Activated naive CD4-positive, alpha-beta T cell treated with anti-CD3 and anti-CD28 coated beads for 36 hours (primary cell): ENCODE measurements at regions of chr16 and their contacts with region 1.

Region 1: GRCh38 chr16:77584205-77584859 is 138.0 kb upstream of the NUDT7 start:
- DNase-seq: peak; percentile 63
- H3K4me3 Mint-ChIP-seq: no peak overlapping the region
- H3K27ac Mint-ChIP-seq: no peak overlapping the region
- H3K4me1 Mint-ChIP-seq: no peaks in the 10 kb centered on the region
- H3K27me3 Mint-ChIP-seq: peaks cover 17% of the 10 kb centered on the region

Region 2: DNA sequence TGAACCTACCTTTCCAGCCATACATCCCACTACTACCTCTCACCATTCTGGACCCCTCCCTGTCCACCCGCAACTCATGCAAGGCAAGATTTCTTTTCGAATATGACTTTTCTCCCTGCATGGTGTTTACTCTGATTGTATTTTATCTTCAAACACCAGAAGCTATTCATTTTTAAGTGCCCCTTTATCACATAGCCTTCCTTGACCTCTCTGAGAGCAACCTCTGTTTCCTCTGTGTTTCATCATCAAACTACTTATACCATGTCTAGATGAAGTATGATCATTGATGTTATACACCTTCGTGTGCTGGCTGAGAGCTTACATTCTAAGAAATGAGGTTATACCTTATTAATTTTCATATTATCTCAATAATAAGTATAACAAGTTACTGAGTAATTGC is 353.3 kb before region 1 on chr16:
- CTCF ChIA-PET with region 1: interaction called, 179 read pairs
- intact Hi-C with region 1: loop called (anchors 1 kb)
- DNase-seq: no peak
- H3K4me3 Mint-ChIP-seq: no peak overlapping the region
- H3K27ac Mint-ChIP-seq: no peak overlapping the region
- H3K4me1 Mint-ChIP-seq: peaks cover 4% of the 10 kb centered on the region
- H3K27me3 Mint-ChIP-seq: peaks cover 21% of the 10 kb centered on the region

Region 3: GRCh38 chr16:77376358-77376757 is 208.0 kb before region 1 on chr16:
- CTCF ChIA-PET with region 1: no interaction called
- intact Hi-C with region 1: loop called (anchors 1 kb)
- DNase-seq: peak; percentile 7
- H3K4me3 Mint-ChIP-seq: no peak overlapping the region
- H3K27ac Mint-ChIP-seq: no peak overlapping the region
- H3K4me1 Mint-ChIP-seq: no peaks in the 10 kb centered on the region
- H3K27me3 Mint-ChIP-seq: peaks cover 4% of the 10 kb centered on the region

Region 4: DNA sequence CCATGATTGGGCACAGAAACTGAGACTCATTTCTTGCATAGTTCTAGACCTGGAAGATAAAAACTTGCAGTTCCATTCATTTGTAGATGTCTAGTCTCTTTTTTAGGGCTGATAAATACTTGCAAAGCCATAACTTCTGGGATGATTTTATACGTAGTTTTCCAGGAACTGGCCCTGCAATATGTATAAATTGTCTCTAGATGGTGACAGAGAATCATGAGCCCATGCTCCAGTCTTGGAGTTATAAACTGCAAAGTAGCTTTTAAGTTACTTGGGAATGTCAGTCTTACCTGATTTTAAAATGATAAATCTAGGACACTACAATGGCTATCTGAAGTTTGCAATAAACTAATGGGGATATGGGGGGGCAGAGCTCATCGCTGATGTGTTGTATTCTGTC is 146.5 kb before region 1 on chr16:
- CTCF ChIA-PET with region 1: no interaction called
- intact Hi-C with region 1: loop called (anchors 5 kb)
- DNase-seq: no peak
- H3K4me3 Mint-ChIP-seq: no peak overlapping the region
- H3K27ac Mint-ChIP-seq: no peak overlapping the region
- H3K4me1 Mint-ChIP-seq: no peaks in the 10 kb centered on the region
- H3K27me3 Mint-ChIP-seq: peaks cover 38% of the 10 kb centered on the region

Region 5: GRCh38 chr16:77551357-77551756 is 33.0 kb before region 1 on chr16:
- CTCF ChIA-PET with region 1: interaction called, 3 read pairs
- intact Hi-C with region 1: loop called (anchors 1 kb)
- DNase-seq: no peak
- H3K4me3 Mint-ChIP-seq: no peak overlapping the region
- H3K27ac Mint-ChIP-seq: no peak overlapping the region
- H3K4me1 Mint-ChIP-seq: peaks cover 2% of the 10 kb centered on the region
- H3K27me3 Mint-ChIP-seq: peaks cover 29% of the 10 kb centered on the region

Region 6: DNA sequence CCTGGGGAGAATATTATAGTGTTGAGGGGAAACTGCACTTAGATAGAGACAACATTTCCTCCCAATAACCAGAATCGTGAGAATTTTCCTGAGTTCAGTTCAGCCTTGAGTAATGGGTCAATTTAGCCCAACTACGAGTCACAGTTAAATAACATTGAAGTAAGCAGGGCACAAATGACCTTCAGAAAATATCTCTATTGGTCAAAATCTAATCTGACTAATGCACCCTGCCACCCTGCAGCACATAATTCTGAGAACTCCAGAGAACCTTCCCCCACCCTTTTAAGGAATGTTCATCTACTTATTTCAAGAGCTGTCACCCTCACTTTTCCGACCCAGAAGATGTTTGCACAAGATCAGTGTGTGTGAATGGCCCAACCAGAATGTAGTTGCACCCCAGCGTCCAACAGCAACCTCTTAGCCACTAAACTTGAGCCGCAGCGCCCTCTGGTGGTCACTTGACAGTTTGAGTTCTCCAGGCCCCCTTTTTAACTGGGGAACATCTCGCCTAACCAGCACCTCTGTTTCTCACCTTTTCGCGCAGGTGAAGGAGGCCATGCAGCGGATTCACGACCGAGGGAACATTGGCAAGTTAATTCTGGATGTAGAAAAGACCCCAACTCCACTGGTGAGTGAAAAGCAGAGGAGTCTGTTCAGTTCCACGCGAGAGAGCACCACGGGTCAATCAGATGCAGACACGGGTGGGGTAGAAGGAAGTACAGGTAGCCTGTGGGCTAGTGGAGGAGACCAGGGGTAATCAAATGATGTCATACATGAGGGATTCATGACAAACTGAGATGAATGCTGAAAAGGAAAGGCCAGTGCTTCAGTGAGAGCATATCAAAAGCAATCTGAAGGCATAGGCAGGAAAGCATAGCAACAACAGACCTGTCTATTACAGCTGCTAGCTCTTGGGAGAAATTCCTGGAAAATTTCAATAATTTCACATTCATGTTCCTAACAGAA is 387.3 kb after region 1 on chr16:
- CTCF ChIA-PET with region 1: no interaction called
- intact Hi-C with region 1: loop called (anchors 5 kb)
- DNase-seq: peak; percentile 85
- H3K4me3 Mint-ChIP-seq: no peak overlapping the region
- H3K27ac Mint-ChIP-seq: no peak overlapping the region
- H3K4me1 Mint-ChIP-seq: peaks cover 3% of the 10 kb centered on the region
- H3K27me3 Mint-ChIP-seq: peaks cover 14% of the 10 kb centered on the region